ENCODE measurements at regions of chr3 and their contacts with region 1.

Region 1: GRCh38 chr3:63911873-63912767 is at the start of gene SCAANT1:
- DNase-seq: peak; percentile 83
- ATAC-seq: peak; percentile 76
- H3K4me3 Mint-ChIP-seq: peak within 1 kb of the TSS; percentile 92
- H3K27ac Mint-ChIP-seq: peak within 1 kb of the TSS; percentile 97
- H3K4me1 Mint-ChIP-seq: peaks cover 37% of the 10 kb centered on the region
- H3K27me3 Mint-ChIP-seq: no peaks in the 10 kb centered on the region
- CTCF ChIP-seq: no peak
- total RNA-seq, gene SCAANT1: not detected

Region 2: DNA sequence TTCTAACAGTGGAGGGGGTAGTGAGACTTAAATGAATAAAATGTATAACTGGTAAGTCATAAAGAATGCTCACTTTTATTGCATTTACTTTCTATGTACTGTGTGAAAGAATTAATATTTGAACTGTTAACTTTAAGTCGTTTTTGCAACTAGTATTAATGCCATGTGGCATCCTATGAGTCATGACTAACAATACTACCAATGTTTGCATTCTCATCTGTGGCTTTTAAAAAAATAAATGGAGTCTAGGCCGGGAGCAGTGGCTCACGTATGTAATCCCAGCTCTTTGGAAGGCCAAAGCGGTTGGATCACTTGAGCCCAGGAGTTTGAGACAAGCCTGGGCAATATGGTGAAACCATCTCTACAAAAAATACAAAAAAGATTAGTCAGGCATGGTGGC is 87.8 kb before region 1 on chr3:
- CTCF ChIA-PET with region 1: no interaction called
- POLR2A ChIA-PET with region 1: no interaction called
- intact Hi-C with region 1: no loop called
- DNase-seq: no peak
- ATAC-seq: no peak
- H3K4me3 Mint-ChIP-seq: no peak overlapping the region
- H3K27ac Mint-ChIP-seq: no peak overlapping the region
- H3K4me1 Mint-ChIP-seq: no peaks in the 10 kb centered on the region
- H3K27me3 Mint-ChIP-seq: no peaks in the 10 kb centered on the region
- CTCF ChIP-seq: no peak

Region 3: DNA sequence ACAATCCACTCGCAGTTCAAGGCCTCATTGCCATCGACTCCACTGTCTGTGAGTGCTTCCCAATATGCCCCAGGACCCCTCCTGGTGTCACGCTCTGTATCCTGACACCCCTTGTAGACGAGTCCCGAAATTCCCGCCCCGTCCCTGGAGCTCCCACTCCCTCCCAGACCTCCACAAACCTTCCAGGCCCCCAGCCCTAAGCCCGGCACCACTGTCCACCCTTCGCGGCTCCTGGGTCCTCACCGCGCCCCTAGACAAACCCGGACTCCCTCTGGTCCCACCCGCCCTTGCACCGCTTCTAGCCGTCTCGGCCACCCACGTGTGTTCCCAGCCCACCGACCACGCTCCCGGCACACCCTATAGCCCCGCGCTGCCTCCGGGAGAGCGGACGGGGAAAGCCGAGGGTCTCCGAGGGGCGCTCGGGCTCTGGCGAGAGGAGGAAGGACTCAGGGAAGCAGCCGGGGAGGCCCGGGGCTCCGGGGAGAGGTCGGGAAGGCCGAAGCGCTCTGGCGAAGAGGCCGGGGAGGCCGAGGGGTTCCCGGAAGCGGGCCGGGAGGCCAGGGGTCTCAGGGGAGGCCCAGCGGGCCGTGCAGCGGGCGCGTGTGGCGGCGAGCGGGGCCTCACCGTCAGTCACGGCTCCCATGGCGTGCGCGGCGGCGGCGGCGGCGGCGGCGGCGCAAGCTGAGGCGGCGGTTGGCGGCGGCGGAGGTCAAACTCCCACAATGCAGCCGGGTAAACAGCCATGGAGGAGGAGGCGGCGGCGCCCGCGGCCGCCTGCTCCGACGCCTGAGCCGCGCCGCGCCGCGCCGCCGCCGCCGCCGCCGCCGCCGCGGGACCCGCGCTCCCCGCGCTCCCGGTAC is 48.7 kb before region 1 on chr3 and contains the starts of genes ATXN7 and THOC7:
- CTCF ChIA-PET with region 1: no interaction called
- POLR2A ChIA-PET with region 1: interaction called, 8 read pairs
- intact Hi-C with region 1: loop called (anchors 5 kb)
- DNase-seq: peak; percentile 72
- ATAC-seq: peak; percentile 69
- H3K4me3 Mint-ChIP-seq: peak within 1 kb of the TSS; percentile 94
- H3K27ac Mint-ChIP-seq: peak within 1 kb of the TSS; percentile 96
- H3K4me1 Mint-ChIP-seq: peaks cover 48% of the 10 kb centered on the region
- H3K27me3 Mint-ChIP-seq: no peaks in the 10 kb centered on the region
- CTCF ChIP-seq: no peak
- total RNA-seq, gene ATXN7: 22.5 to 25.9 TPM
- total RNA-seq, gene THOC7: 85.0 to 85.5 TPM

Region 4: GRCh38 chr3:63961891-63962290 is 49.8 kb after region 1 on chr3:
- CTCF ChIA-PET with region 1: interaction called, 3 read pairs
- POLR2A ChIA-PET with region 1: no interaction called
- intact Hi-C with region 1: loop called (anchors 10 kb)
- DNase-seq: no peak
- ATAC-seq: peak; percentile 85
- H3K4me3 Mint-ChIP-seq: no peak overlapping the region
- H3K27ac Mint-ChIP-seq: no peak overlapping the region
- H3K4me1 Mint-ChIP-seq: peaks cover 49% of the 10 kb centered on the region
- H3K27me3 Mint-ChIP-seq: no peaks in the 10 kb centered on the region
- CTCF ChIP-seq: peak; percentile 79